Thyroid gland (tissue), 4 donors: ENCODE measurements at regions of chr11 and their contacts with region 1.

Region 1: GRCh38 chr11:43504316-43504950 is 145.7 kb downstream of the TTC17 start:
- DNase-seq: peak; percentile 8 to 11
- H3K4me3 ChIP-seq: no peak overlapping the region
- H3K27ac ChIP-seq: no peak overlapping the region
- H3K4me1 ChIP-seq: no peaks in the 10 kb centered on the region
- H3K27me3 ChIP-seq: no peaks in the 10 kb centered on the region
- CTCF ChIP-seq: peak in 3 of 6 experiments; percentile 27 to 44 (median 34)
- POLR2A ChIP-seq: no peak

Region 2: DNA sequence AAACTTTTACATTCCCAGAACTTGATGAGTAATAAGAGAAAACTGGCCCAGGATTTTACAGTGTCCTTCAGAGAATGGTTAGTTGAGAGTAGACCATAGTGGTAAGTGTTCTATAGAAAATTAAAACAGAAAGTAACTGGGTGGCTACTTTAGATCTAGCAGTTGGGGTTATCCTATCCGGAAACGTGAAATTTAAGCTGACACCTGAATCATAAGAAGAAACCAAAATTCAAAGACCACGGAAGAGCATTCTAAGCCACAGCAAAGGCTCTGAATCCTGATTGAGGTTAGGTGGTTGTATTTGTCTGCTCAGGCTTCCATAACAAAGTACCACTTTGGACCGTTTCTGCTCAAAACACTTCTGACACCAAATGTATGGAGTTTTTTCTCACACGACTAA is 111.7 kb before region 1 on chr11:
- intact Hi-C with region 1: no loop called
- DNase-seq: no peak
- H3K4me3 ChIP-seq: no peak overlapping the region
- H3K27ac ChIP-seq: no peak overlapping the region
- H3K4me1 ChIP-seq: peaks cover 4 to 19% of the 10 kb centered on the region in 2 donors
- H3K27me3 ChIP-seq: no peaks in the 10 kb centered on the region
- CTCF ChIP-seq: no peak
- POLR2A ChIP-seq: no peak

Region 3: GRCh38 chr11:43567396-43567975 is 63.1 kb after region 1 on chr11:
- intact Hi-C with region 1: loop called (anchors 10 kb)
- DNase-seq: no peak
- H3K4me3 ChIP-seq: no peak overlapping the region
- H3K27ac ChIP-seq: no peak overlapping the region
- H3K4me1 ChIP-seq: no peaks in the 10 kb centered on the region
- H3K27me3 ChIP-seq: no peaks in the 10 kb centered on the region
- CTCF ChIP-seq: peak; percentile 23 to 71 (median 36)
- POLR2A ChIP-seq: no peak